Activated CD8-positive, alpha-beta T cell treated with anti-CD3 and anti-CD28 coated beads for 36 hours (primary cell): ENCODE measurements at regions of chr10 and their contacts with region 1.

Region 1: GRCh38 chr10:71569775-71570588 is 149.6 kb downstream of the C10orf105 start:
- DNase-seq: peak; percentile 87
- ATAC-seq: peak; percentile 79
- H3K4me3 Mint-ChIP-seq: no peak overlapping the region
- H3K27ac Mint-ChIP-seq: no peak overlapping the region
- H3K4me1 Mint-ChIP-seq: no peaks in the 10 kb centered on the region
- H3K27me3 Mint-ChIP-seq: no peaks in the 10 kb centered on the region
- CTCF ChIP-seq: peak; percentile 84

Region 2: GRCh38 chr10:71378336-71379117 is 191.5 kb before region 1 on chr10:
- CTCF ChIA-PET with region 1: interaction called, 20 read pairs
- POLR2A ChIA-PET with region 1: interaction called, 3 read pairs
- intact Hi-C with region 1: no loop called
- DNase-seq: no peak
- ATAC-seq: no peak
- H3K4me3 Mint-ChIP-seq: no peak overlapping the region
- H3K27ac Mint-ChIP-seq: no peak overlapping the region
- H3K4me1 Mint-ChIP-seq: peaks cover 8% of the 10 kb centered on the region
- H3K27me3 Mint-ChIP-seq: no peaks in the 10 kb centered on the region
- CTCF ChIP-seq: no peak

Region 3: GRCh38 chr10:71396084-71396720 is 173.8 kb before region 1 on chr10:
- CTCF ChIA-PET with region 1: interaction called, 38 read pairs
- POLR2A ChIA-PET with region 1: no interaction called
- intact Hi-C with region 1: loop called (anchors 5 kb)
- DNase-seq: peak; percentile 59
- ATAC-seq: peak; percentile 80
- H3K4me3 Mint-ChIP-seq: peak overlapping the region; percentile 22
- H3K27ac Mint-ChIP-seq: no peak overlapping the region
- H3K4me1 Mint-ChIP-seq: no peaks in the 10 kb centered on the region
- H3K27me3 Mint-ChIP-seq: peaks cover 51% of the 10 kb centered on the region
- CTCF ChIP-seq: peak; percentile 4

Region 4: GRCh38 chr10:71522442-71523144 is 47.4 kb before region 1 on chr10:
- CTCF ChIA-PET with region 1: interaction called, 10 read pairs
- POLR2A ChIA-PET with region 1: no interaction called
- intact Hi-C with region 1: no loop called
- DNase-seq: no peak
- ATAC-seq: no peak
- H3K4me3 Mint-ChIP-seq: no peak overlapping the region
- H3K27ac Mint-ChIP-seq: no peak overlapping the region
- H3K4me1 Mint-ChIP-seq: no peaks in the 10 kb centered on the region
- H3K27me3 Mint-ChIP-seq: peaks cover 7% of the 10 kb centered on the region
- CTCF ChIP-seq: no peak

Region 5: GRCh38 chr10:71584902-71585563 is 15.1 kb after region 1 on chr10:
- CTCF ChIA-PET with region 1: interaction called, 21 read pairs
- POLR2A ChIA-PET with region 1: no interaction called
- intact Hi-C with region 1: no loop called
- DNase-seq: no peak
- ATAC-seq: no peak
- H3K4me3 Mint-ChIP-seq: no peak overlapping the region
- H3K27ac Mint-ChIP-seq: no peak overlapping the region
- H3K4me1 Mint-ChIP-seq: no peaks in the 10 kb centered on the region
- H3K27me3 Mint-ChIP-seq: peaks cover 2% of the 10 kb centered on the region
- CTCF ChIP-seq: no peak